Cardiac septum (tissue), 1 donor: ENCODE measurements at regions of chr2 and their contacts with region 1.

Region 1: DNA sequence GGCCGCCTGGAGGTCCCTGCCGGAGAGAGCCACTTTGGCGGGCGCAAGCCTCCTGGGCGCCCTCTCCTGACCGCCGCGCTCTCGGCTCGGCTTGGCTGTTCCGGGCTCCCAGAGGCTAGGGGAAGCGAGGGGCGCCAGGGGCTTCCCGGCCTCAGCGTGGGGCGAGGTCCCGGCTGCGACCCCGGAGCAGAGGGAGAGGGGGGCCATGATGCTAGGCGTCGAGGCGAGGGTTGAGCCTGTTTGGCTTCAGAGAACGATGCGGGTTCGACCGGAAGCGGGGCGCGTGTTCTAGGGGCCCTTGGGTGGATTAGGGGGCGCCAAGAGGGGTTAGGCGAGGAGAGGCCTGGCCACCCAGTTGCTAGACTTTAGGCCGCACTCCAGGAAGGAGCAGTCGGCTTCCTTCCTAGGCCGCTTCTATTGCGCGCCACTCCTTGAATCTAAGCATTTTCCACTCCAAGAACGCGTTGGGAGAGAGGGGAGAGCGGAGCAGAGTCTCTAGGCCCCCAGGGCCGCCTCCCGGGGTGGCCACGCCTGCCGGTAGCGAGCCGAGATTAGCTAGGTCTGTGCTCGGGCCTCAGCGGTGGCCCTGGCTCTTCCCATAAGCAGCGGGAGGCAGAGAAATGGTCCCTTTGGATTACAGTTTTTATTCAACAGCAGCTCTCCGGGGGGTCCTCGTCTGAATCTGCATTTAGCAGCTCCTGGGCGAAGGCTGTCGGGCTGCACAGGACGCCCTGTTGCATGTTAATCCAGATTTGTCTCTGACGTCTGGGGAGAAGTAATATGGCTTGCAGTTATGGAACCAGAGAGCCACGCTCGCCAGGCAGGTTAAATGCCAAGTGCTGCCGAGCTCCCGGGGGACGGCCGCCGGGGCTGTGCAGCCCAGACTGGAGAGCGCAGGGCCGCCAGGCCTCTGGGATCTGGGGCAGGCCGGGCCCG is 11.3 kb downstream of the MEIS1 start:
- DNase-seq: no peak

Region 2: DNA sequence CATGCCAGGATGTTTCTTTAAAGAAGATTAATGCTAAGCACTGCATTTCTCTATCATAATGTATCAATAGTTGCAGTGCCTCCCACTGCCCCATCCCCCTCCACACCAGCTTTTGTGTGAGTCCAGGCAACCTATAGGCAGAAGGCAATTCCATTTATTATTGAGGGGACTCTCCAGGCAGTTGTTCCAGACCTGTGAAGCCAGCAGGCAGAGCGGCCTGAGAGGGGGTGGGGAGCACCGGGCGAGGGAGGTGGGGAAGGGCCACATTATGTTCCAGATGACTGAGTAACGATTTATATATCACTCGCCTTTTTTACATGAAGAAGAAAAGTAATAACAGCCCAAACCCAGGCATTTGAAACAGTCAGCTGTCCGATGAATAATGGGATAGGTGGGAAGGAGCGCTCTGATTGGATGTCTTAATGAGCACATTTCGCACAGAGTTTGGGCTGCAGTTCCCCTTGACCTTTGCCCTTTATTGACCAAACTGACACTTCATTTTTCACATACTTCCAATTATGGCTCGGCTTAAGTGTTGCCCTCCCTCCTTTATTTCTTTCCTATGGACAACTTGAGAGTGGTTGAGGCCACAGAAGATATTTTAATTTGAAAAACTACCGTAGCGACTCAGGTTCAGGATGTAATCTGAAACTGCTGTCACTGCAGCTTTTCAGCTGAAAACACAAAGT is 23.2 kb after region 1 on chr2:
- intact Hi-C with region 1: no loop called
- DNase-seq: no peak

Region 3: DNA sequence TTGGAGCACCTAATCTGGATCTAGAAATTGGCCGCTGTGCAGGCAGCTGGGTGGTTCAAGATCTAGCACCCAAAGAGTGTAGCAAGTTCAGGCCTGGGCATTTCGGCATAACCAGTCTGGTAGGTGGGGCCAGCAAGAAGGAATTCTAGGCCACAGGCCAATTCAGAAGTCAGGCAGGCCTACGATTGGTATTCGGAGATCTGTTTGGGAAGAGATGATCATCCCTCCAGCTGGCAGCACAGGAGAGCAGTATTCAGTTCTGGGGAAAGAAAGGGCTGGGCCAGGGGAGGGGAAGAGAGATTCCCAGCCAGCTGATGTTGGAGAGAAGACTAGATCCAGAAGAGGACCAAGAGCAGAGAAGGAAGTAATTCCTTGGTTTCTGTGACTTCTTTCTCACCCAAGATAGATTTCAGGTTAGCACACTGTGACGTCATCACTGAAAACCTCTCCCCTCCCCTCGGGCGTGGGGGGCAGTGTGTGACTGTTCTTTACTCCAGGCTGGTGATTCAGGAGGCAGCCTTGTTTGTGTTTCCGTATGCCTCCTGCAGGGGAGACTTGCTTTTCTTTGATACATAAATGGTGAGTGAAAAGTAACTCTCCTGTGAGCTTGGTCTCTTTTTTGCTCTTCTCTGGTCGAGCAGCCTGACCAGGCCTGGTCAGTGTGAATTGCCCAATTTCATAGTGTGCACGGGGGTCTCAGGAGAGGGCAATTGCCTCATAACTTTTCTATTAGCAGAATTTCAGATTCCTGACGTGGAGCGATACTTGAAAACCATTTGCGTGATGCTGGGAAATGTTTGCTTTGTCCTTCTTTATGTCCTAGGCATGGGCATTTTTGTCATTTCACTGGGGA is 49.8 kb after region 1 on chr2:
- intact Hi-C with region 1: loop called (anchors 5 kb)
- DNase-seq: peak; percentile 75

Region 4: GRCh38 chr2:66536997-66537396 is 90.8 kb after region 1 on chr2:
- intact Hi-C with region 1: no loop called
- DNase-seq: no peak

Region 5: DNA sequence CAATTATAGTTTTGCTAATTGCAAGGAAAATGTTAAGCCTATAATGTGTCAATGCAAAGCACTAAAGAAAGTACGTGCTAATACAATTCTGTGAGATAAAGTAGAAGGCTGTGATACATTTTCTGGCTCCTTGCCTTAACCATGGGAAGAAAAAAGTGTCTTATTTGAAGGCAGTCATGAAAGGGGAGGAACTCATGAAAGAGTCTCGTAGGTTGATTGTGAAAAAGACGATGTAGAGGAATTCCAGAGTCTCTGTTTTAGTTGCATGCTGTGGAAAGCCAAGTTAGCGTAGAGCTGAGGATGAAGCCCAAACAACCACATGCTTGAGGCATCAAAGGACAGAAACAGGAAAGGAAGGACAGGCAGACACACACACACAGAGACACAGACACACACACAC is 202.8 kb after region 1 on chr2:
- intact Hi-C with region 1: no loop called
- DNase-seq: no peak

Region 6: GRCh38 chr2:66832646-66833435 is 386.6 kb after region 1 on chr2:
- intact Hi-C with region 1: no loop called
- DNase-seq: no peak